ENCODE measurements at regions of chr16 and their contacts with region 1.

Region 1: GRCh38 chr16:57475711-57476339 is 10.5 kb downstream of the DOK4 start:
- DNase-seq: peak; percentile 71 to 84
- ATAC-seq: peak; percentile 92 to 98 (median 93)
- H3K4me3 ChIP-seq: no peak overlapping the region
- H3K4me3 Mint-ChIP-seq: no peak overlapping the region
- H3K27ac ChIP-seq: no peak overlapping the region
- H3K27ac Mint-ChIP-seq: peak overlapping the region in 1 of 2 donors; percentile 14
- H3K4me1 ChIP-seq: peaks cover 34% of the 10 kb centered on the region
- H3K4me1 Mint-ChIP-seq: peaks cover 19 to 35% of the 10 kb centered on the region in 2 donors
- H3K27me3 ChIP-seq: no peaks in the 10 kb centered on the region
- H3K27me3 Mint-ChIP-seq: no peaks in the 10 kb centered on the region
- CTCF ChIP-seq: peak; percentile 75

Region 2: GRCh38 chr16:57341441-57342303 is 134.2 kb before region 1 on chr16:
- intact Hi-C with region 1: no loop called
- DNase-seq: no peak
- ATAC-seq: no peak
- H3K4me3 ChIP-seq: no peak overlapping the region
- H3K4me3 Mint-ChIP-seq: no peak overlapping the region
- H3K27ac ChIP-seq: no peak overlapping the region
- H3K27ac Mint-ChIP-seq: no peak overlapping the region
- H3K4me1 ChIP-seq: no peaks in the 10 kb centered on the region
- H3K4me1 Mint-ChIP-seq: peaks cover 5 to 6% of the 10 kb centered on the region in 2 donors
- H3K27me3 ChIP-seq: no peaks in the 10 kb centered on the region
- H3K27me3 Mint-ChIP-seq: peaks cover 29 to 49% of the 10 kb centered on the region in 2 donors
- CTCF ChIP-seq: no peak

Region 3: GRCh38 chr16:57519796-57520360 is 44.1 kb after region 1 on chr16:
- intact Hi-C with region 1: loop called (anchors 5 kb)
- DNase-seq: peak; percentile 79 to 89
- ATAC-seq: peak; percentile 79 to 99 (median 95)
- H3K4me3 ChIP-seq: no peak overlapping the region
- H3K4me3 Mint-ChIP-seq: no peak overlapping the region
- H3K27ac ChIP-seq: no peak overlapping the region
- H3K27ac Mint-ChIP-seq: peak overlapping the region in 1 of 2 donors; percentile 57
- H3K4me1 ChIP-seq: peaks cover 18% of the 10 kb centered on the region
- H3K4me1 Mint-ChIP-seq: peaks cover 21 to 25% of the 10 kb centered on the region in 2 donors
- H3K27me3 ChIP-seq: no peaks in the 10 kb centered on the region
- H3K27me3 Mint-ChIP-seq: no peaks in the 10 kb centered on the region
- CTCF ChIP-seq: peak; percentile 94